Brain microvascular endothelial cell (primary cell): ENCODE measurements at regions of chr1 and their contacts with region 1.

Region 1: GRCh38 chr1:2205191-2205952 is 10.8 kb upstream of the FAAP20 start:
- DNase-seq: peak; percentile 89
- H3K4me3 ChIP-seq: peak overlapping the region; percentile 41
- H3K27ac ChIP-seq: peak overlapping the region; percentile 56
- H3K27me3 ChIP-seq: no peaks in the 10 kb centered on the region
- CTCF ChIP-seq: no peak

Region 2: DNA sequence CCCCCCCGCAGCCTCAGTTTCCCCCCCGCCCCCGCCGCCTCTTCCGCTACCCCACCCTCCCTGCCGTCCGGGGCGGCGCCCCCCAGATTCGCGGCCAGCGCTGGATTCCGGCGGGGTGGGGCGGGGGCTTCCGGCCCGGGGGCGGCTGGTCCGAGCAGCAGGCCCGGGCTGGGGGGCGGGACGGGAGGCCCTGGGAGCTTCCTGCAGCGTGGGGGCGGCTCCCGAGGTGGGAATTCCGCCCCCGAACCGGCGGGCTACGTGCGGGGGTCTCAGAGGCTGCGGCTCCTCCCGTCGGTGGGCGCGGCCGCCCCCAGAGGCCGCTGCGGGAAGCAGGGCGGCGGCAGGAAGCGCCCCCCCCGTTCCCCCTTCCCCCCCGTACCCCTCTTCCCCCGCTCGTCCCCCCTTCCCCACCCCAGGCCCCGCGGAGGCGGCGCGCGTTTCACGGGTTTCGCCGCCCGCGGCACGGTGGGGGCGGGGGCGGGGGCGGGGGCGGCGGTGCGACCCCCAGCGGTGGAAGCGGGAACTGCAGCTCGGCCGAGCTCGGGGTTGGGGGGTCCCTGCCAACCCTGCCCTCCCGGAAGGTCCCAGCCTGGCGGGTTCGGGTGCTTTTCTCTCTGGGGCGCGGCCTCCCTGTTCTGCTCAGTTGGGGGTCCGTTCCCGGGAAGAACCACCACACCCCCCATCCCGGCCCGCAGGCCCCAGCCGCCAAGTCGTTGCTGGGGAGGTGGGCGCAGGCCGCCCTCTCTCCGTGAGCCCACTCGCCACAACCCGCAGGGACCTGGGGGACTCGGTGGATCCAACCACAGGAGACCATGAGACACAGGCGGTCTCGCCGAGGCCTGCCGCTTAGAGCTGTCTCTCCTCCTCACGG is 109.7 kb after region 1 on chr1:
- in situ Hi-C with region 1: loop called (anchors 25 kb)
- DNase-seq: no peak
- H3K4me3 ChIP-seq: peak overlapping the region; percentile 38
- H3K27ac ChIP-seq: peak overlapping the region; percentile 49
- H3K27me3 ChIP-seq: no peaks in the 10 kb centered on the region
- CTCF ChIP-seq: peak; percentile 71